Thyroid gland (tissue), 4 donors: ENCODE measurements at regions of chr14 and their contacts with region 1.

Region 1: DNA sequence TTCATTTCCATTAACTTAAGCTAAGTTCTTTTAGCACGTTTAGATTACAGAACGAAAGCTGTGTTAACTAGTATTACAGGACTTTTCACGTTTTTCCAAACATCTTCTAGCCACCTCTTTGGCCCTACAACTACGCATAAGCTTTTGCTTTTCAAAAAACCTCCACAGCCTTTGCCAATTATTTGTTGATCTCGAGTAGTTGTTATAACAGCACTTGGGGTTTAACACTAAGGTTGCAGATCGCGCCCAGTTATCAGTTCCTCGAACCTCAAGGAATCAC is 450 bp upstream of the RBM25 start:
- DNase-seq: no peak
- H3K4me3 ChIP-seq: peak overlapping the region in 2 of 3 donors; percentile 52 to 69
- H3K27ac ChIP-seq: peak overlapping the region; percentile 85 to 96 (median 96)
- H3K4me1 ChIP-seq: peaks cover 12 to 33% of the 10 kb centered on the region in 2 donors
- H3K27me3 ChIP-seq: no peaks in the 10 kb centered on the region
- CTCF ChIP-seq: no peak
- POLR2A ChIP-seq: no peak

Region 2: GRCh38 chr14:72830786-72831594 is 226.9 kb before region 1 on chr14:
- intact Hi-C with region 1: no loop called
- DNase-seq: peak in 1 of 2 donors; percentile 2
- H3K4me3 ChIP-seq: no peak overlapping the region
- H3K27ac ChIP-seq: no peak overlapping the region
- H3K4me1 ChIP-seq: no peaks in the 10 kb centered on the region
- H3K27me3 ChIP-seq: no peaks in the 10 kb centered on the region
- CTCF ChIP-seq: no peak
- POLR2A ChIP-seq: no peak

Region 3: GRCh38 chr14:73026845-73027542 is 30.9 kb before region 1 on chr14 and contains the start of gene ZFYVE1:
- intact Hi-C with region 1: loop called (anchors 2 kb)
- DNase-seq: peak; percentile 98 to 99
- H3K4me3 ChIP-seq: peak within 1 kb of the TSS; percentile 73 to 87 (median 86)
- H3K27ac ChIP-seq: peak within 1 kb of the TSS; percentile 83 to 93 (median 87)
- H3K4me1 ChIP-seq: peaks cover 7 to 22% of the 10 kb centered on the region in 2 donors
- H3K27me3 ChIP-seq: no peaks in the 10 kb centered on the region
- CTCF ChIP-seq: no peak
- POLR2A ChIP-seq: peak; percentile 48 to 93
- total RNA-seq, gene ZFYVE1: 21.9 to 29.2 (median 27.1) TPM

Region 4: GRCh38 chr14:73261520-73262426 is 203.9 kb after region 1 on chr14:
- intact Hi-C with region 1: no loop called
- DNase-seq: no peak
- H3K4me3 ChIP-seq: no peak overlapping the region
- H3K27ac ChIP-seq: no peak overlapping the region
- H3K4me1 ChIP-seq: no peaks in the 10 kb centered on the region
- H3K27me3 ChIP-seq: no peaks in the 10 kb centered on the region
- CTCF ChIP-seq: no peak
- POLR2A ChIP-seq: no peak